ENCODE measurements at regions of chr6 and their contacts with region 1.

Region 1: DNA sequence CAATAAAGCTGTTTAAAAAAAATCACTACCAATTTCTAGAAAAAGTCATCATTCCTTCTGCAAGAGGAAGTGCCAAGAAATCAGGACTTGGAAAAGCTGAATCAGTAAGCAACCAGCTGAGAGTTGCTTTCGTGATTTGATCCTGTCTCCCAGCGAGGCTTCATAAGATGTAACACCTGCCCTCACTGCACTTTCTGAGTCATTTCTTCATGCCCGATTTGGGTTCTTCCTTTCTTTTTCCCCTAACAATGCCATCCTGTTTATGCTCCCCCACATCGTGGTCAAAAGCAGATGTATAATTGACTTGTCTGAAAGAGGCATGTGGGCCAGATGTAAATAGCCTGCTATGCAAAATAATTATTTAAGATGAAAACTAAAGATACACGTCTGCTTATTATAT is 52.1 kb downstream of the RIPOR2 start:
- DNase-seq: peak; percentile 82
- H3K4me3 Mint-ChIP-seq: peak overlapping the region; percentile 73
- H3K27ac Mint-ChIP-seq: peak overlapping the region; percentile 99
- H3K4me1 Mint-ChIP-seq: peaks cover 91% of the 10 kb centered on the region
- H3K27me3 Mint-ChIP-seq: no peaks in the 10 kb centered on the region

Region 2: GRCh38 chr6:24353861-24354260 is 529.8 kb before region 1 on chr6:
- CTCF ChIA-PET with region 1: no interaction called
- intact Hi-C with region 1: no loop called
- DNase-seq: no peak
- H3K4me3 Mint-ChIP-seq: no peak overlapping the region
- H3K27ac Mint-ChIP-seq: no peak overlapping the region
- H3K4me1 Mint-ChIP-seq: peaks cover 9% of the 10 kb centered on the region
- H3K27me3 Mint-ChIP-seq: peaks cover 11% of the 10 kb centered on the region

Region 3: DNA sequence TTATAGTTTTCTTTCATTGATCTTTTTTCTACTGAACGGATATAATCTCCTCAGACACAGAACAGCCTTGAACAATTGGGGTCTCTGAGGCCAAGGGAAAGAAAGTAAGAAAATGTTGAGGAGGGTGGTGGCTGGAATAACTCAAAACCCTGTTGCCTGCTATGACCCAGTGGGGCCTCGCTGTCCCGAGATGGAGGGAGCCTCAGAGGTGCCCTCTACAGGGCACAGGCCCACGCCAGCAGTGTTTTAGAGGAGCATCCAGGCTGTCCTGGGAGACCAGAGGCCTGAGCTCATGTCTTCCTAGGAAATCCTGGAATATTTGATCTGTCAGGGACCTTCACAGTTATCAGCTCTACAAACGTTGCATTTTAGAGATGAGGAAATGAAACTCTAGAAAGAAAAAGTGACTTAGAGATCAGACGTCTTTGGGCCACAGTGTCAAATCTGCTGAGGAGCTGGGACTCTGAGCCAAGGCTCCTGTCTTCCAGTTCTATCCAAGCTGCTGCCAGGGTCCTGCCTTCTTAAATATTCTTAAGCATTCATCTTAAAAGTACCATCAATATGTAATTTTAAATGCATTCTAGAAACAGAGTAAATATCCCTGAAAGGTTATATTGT is 362.6 kb before region 1 on chr6:
- CTCF ChIA-PET with region 1: no interaction called
- intact Hi-C with region 1: no loop called
- DNase-seq: peak; percentile 62
- H3K4me3 Mint-ChIP-seq: no peak overlapping the region
- H3K27ac Mint-ChIP-seq: no peak overlapping the region
- H3K4me1 Mint-ChIP-seq: peaks cover 8% of the 10 kb centered on the region
- H3K27me3 Mint-ChIP-seq: no peaks in the 10 kb centered on the region

Region 4: GRCh38 chr6:24699521-24700359 is 183.9 kb before region 1 on chr6:
- CTCF ChIA-PET with region 1: no interaction called
- intact Hi-C with region 1: no loop called
- DNase-seq: no peak
- H3K4me3 Mint-ChIP-seq: no peak overlapping the region
- H3K27ac Mint-ChIP-seq: peak overlapping the region; percentile 84
- H3K4me1 Mint-ChIP-seq: peaks cover 45% of the 10 kb centered on the region
- H3K27me3 Mint-ChIP-seq: no peaks in the 10 kb centered on the region

Region 5: DNA sequence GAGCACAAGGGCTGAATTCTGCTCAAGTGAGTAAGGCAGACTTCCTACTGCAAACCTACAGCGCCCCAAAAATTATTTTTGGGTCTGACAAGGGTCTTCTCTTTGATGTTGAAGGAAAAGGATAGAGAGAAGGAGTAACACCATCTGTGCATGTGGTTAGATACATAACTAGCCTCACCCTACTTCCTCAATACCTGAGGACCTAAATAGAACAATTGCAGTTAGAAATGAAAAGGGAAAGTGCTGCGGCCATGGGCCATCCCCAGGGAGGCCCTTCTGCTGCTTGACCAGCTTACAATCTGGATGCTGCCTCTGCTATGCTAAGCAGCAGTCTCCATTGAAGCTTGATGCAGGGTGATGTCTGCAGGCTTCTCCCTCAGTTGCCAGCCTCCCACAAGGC is 21.7 kb before region 1 on chr6:
- CTCF ChIA-PET with region 1: interaction called, 14 read pairs
- intact Hi-C with region 1: loop called (anchors 1 kb)
- DNase-seq: no peak
- H3K4me3 Mint-ChIP-seq: peak overlapping the region; percentile 33
- H3K27ac Mint-ChIP-seq: peak overlapping the region; percentile 82
- H3K4me1 Mint-ChIP-seq: peaks cover 92% of the 10 kb centered on the region
- H3K27me3 Mint-ChIP-seq: no peaks in the 10 kb centered on the region

Region 6: DNA sequence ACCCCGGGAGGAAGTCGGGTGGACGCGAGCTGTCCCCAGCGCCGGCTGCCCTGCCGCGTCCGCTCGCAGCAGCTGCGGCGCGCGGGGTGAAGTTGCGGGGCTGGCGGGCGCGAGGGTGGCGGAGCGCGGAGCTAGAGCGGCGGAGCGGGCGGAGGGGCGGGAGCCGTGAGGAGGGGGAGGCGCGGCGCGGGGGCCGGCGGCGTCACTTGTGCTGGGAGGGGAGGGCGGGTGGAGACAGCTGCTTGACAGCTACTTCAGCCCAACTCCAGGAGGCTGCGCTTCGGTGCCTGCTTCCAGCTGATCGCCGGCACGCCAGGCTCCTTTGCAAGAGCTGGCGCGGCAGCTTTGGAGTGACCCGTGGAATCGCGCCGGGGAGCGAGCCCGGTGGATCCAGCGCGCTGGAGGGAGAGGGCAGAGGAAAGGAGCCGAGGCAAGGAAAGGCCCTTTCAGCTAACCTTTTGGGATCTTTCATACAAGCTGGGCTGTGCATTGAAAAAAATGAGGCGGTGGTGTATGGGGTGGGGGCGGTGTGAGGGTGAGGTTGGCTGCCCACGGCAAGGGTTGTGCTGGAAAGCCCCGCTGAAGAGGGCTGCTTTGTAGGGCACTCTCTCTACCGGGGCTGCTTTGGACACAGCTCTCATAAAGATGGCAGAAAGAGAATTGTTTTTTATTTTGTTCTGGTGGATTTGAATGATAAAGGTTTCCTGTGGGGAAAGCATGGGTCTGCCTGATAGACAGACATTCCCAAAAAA is 27.5 kb after region 1 on chr6:
- CTCF ChIA-PET with region 1: interaction called, 10 read pairs
- intact Hi-C with region 1: loop called (anchors 1 kb)
- DNase-seq: peak; percentile 70
- H3K4me3 Mint-ChIP-seq: peak overlapping the region; percentile 92
- H3K27ac Mint-ChIP-seq: peak overlapping the region; percentile 96
- H3K4me1 Mint-ChIP-seq: peaks cover 76% of the 10 kb centered on the region
- H3K27me3 Mint-ChIP-seq: no peaks in the 10 kb centered on the region

Region 7: GRCh38 chr6:24974182-24975171 is 90.9 kb after region 1 on chr6:
- CTCF ChIA-PET with region 1: no interaction called
- intact Hi-C with region 1: loop called (anchors 1 kb)
- DNase-seq: peak; percentile 59
- H3K4me3 Mint-ChIP-seq: peak overlapping the region; percentile 16
- H3K27ac Mint-ChIP-seq: peak overlapping the region; percentile 92
- H3K4me1 Mint-ChIP-seq: peaks cover 58% of the 10 kb centered on the region
- H3K27me3 Mint-ChIP-seq: no peaks in the 10 kb centered on the region

Region 8: DNA sequence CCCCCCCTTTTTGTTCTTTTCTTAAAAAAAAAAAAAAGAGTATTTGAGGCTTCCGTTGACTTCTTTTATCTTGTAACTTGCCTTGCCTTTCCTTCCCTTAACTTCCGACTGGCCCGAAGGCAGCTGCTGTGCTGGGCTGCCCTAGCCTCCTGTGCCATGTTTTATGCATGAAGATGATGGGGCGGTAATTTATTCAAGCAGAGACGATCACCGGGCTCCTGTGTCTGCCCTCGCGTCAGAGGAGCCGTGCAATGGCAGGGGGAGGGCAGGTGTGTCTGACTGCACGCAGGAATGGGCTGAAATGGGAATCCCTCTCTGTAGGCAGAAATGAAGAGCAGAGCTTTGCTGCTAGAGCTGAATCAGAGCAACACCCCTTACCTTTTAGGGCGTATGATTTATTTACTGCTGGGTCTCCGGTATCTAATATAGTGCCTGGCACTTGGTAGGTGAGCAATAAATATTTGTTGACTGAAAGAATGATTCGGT is 158.5 kb after region 1 on chr6:
- CTCF ChIA-PET with region 1: interaction called, 3 read pairs
- intact Hi-C with region 1: loop called (anchors 1 kb)
- DNase-seq: peak; percentile 73
- H3K4me3 Mint-ChIP-seq: peak overlapping the region; percentile 92
- H3K27ac Mint-ChIP-seq: peak overlapping the region; percentile 97
- H3K4me1 Mint-ChIP-seq: peaks cover 66% of the 10 kb centered on the region
- H3K27me3 Mint-ChIP-seq: no peaks in the 10 kb centered on the region